ENCODE measurements at regions of chr1 and their contacts with region 1.

Region 1: GRCh38 chr1:84753516-84754385 is 63.5 kb upstream of the SSX2IP start:
- DNase-seq: peak; percentile 57 to 64
- H3K4me3 ChIP-seq: no peak overlapping the region
- H3K4me3 Mint-ChIP-seq: no peak overlapping the region
- H3K27ac Mint-ChIP-seq: no peak overlapping the region
- H3K4me1 ChIP-seq: no peaks in the 10 kb centered on the region
- H3K4me1 Mint-ChIP-seq: no peaks in the 10 kb centered on the region
- H3K27me3 ChIP-seq: no peaks in the 10 kb centered on the region
- H3K27me3 Mint-ChIP-seq: no peaks in the 10 kb centered on the region
- CTCF ChIP-seq: peak; percentile 78 to 87

Region 2: DNA sequence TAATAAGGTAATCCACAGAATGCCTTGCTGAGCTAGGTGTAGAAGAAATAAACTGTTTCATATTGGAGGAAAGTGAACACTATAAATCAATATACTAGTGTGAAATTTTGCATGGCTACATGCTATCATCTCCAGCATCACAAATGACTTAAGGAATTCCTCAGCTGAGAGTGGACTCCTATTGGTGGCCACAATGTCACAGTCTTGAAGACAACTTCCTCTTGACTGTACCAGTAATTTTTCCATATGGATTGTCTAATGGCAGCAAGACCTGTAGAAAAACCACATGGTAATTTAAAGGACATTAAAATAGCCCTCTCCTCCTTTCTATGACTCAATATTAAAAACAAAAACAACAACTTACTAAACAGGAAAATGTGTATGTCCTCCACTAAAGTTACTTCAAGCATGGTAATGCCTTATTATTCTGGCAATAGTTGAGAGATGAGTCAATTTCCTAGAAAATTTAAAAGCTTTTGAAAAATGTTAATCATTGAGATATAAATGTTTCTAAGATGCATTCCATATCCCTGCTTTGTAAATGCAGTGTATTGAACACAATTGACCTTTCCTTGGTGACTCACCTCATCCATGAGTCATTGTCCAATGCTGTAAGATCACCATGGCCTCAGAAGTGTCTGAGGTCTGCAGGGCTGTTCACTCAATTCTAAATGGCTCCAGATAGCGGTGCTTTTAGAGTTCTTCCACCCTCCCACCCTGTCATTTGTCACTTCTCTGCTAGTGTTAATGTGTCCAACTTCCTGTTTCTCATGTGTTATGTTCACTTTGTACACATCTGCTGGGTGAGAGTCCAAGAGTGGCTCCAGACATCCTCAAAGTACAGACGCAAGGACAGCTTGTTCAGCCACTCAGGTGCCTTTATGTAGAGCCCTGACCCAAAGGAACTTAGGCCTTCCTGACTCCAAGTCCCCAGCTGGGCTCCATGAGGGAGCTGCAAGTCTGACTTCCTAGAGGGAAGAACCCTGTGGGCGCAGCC is 388.2 kb before region 1 on chr1:
- CTCF ChIA-PET with region 1: no interaction called
- POLR2A ChIA-PET with region 1: no interaction called
- intact Hi-C with region 1: no loop called
- DNase-seq: peak; percentile 5 to 25
- H3K4me3 ChIP-seq: no peak overlapping the region
- H3K4me3 Mint-ChIP-seq: no peak overlapping the region
- H3K27ac Mint-ChIP-seq: no peak overlapping the region
- H3K4me1 ChIP-seq: no peaks in the 10 kb centered on the region; the same call in 1 of the 2 replicates
- H3K4me1 Mint-ChIP-seq: no peaks in the 10 kb centered on the region
- H3K27me3 ChIP-seq: no peaks in the 10 kb centered on the region
- H3K27me3 Mint-ChIP-seq: no peaks in the 10 kb centered on the region
- CTCF ChIP-seq: no peak

Region 3: DNA sequence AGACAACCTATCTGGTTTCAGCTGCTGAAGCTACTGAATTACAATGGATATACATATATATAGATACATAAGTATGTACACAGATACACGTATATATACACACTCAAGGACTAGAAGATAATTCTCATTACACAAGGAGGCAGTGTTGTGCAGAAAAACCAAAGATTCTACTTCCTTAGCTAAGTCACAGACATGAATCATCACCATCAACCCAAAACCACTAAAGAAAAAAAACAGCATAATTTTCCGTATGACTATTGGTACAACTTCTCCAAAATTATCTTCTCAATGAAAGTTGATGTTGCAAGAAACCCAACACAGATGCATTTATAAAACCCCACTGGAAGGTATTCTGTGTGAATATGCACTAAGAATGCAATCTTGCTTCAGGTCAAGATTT is 311.5 kb before region 1 on chr1:
- CTCF ChIA-PET with region 1: interaction called, 3 read pairs
- POLR2A ChIA-PET with region 1: no interaction called
- intact Hi-C with region 1: loop called (anchors 1 kb)
- DNase-seq: peak in 1 of 2 experiments; percentile 1
- H3K4me3 ChIP-seq: no peak overlapping the region
- H3K4me3 Mint-ChIP-seq: no peak overlapping the region
- H3K27ac Mint-ChIP-seq: no peak overlapping the region
- H3K4me1 ChIP-seq: no peaks in the 10 kb centered on the region
- H3K4me1 Mint-ChIP-seq: no peaks in the 10 kb centered on the region
- H3K27me3 ChIP-seq: no peaks in the 10 kb centered on the region
- H3K27me3 Mint-ChIP-seq: peaks cover 5% of the 10 kb centered on the region
- CTCF ChIP-seq: peak in 1 of 2 experiments; percentile 13

Region 4: DNA sequence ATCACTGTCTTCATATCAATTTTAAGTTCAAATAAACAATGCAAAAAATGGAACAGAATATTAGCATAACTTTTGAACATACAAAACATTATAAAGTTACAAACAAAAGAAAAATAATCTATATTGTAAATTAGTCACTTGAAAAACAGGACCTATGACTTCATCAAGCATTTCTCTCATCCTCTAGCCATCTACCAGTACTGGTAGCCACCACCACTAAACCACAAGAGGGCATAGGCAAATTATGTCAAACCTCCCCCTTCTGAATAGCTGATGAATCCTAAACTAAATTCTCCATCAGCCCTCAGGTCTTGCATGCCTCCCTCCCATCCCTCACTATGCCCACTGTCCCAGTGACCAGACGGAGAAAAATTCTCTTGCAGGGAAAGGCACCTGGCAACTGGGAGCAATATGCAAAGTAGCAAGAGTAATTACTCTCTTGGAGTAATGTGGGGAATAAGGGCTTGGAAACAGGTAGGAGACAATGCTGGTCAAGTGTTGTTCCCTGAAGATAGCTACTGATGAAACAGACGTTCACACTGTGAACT is 100.5 kb before region 1 on chr1:
- CTCF ChIA-PET with region 1: no interaction called
- POLR2A ChIA-PET with region 1: no interaction called
- intact Hi-C with region 1: loop called (anchors 1 kb)
- DNase-seq: no peak
- H3K4me3 ChIP-seq: no peak overlapping the region
- H3K4me3 Mint-ChIP-seq: no peak overlapping the region
- H3K27ac Mint-ChIP-seq: no peak overlapping the region
- H3K4me1 ChIP-seq: no peaks in the 10 kb centered on the region
- H3K4me1 Mint-ChIP-seq: no peaks in the 10 kb centered on the region
- H3K27me3 ChIP-seq: no peaks in the 10 kb centered on the region
- H3K27me3 Mint-ChIP-seq: no peaks in the 10 kb centered on the region
- CTCF ChIP-seq: no peak

Region 5: DNA sequence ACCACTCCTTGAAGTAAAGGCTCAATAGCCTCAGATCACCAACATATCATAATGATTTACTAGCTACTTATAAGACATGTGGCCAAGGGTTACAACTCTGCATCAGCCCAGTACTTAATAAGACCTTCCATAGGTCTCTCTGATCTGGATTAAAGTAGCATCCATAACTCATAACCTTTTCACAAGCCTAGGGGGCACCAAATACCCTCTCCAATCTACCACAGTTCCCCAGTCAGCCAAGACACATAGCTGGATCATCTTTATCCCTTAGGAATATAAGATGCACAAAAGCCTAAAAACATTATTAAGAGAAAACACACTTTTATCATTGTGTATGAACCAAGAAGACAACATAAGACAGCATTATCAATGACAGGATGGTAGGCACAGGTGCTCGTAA is 85.6 kb before region 1 on chr1:
- CTCF ChIA-PET with region 1: no interaction called
- POLR2A ChIA-PET with region 1: no interaction called
- intact Hi-C with region 1: loop called (anchors 1 kb)
- DNase-seq: peak in 1 of 2 experiments; percentile 15
- H3K4me3 ChIP-seq: no peak overlapping the region
- H3K4me3 Mint-ChIP-seq: no peak overlapping the region
- H3K27ac Mint-ChIP-seq: no peak overlapping the region
- H3K4me1 ChIP-seq: no peaks in the 10 kb centered on the region
- H3K4me1 Mint-ChIP-seq: no peaks in the 10 kb centered on the region
- H3K27me3 ChIP-seq: no peaks in the 10 kb centered on the region
- H3K27me3 Mint-ChIP-seq: no peaks in the 10 kb centered on the region
- CTCF ChIP-seq: peak in 1 of 2 experiments; percentile 17

Region 6: DNA sequence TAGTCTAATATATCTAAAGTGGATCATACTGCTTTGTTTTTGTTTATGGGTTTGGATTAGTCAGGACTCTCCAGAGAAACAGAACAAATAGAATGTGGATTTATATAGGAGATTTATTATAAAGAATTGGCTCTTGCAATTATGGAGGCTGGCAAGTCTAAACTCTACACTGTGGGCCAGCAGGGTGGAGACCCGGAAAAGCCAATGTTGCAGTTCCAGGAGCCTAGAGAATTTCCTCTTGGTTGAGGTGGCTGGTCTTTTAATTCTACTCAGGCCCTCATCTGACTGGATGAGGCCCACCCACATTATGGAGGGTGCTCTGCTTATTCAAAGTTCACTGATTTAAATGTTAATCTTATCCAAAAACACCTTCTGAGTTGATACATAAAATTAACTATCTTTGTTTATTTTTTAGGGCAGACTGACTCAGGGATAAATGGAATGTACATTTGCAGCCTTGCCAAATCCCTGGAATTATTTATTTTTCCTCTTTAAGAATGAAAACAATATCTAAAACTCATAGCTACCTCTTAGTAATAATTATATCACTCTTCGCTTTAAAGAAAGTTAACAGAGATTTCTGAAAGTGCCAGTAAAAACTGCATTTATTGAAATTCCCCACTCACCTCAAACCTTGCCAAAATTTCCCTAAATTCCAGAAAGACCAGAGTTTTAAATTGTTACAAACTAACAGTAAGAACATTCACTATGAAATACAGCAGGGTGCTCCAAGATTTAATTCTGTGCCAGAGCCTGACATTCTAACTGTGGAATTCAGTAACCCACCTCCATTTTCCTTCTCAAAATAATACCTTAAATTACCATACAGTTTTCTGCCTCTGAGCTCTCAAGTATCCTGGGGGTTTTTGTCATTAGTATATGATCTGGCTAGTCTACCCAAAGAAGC is 26.9 kb before region 1 on chr1:
- CTCF ChIA-PET with region 1: no interaction called
- POLR2A ChIA-PET with region 1: no interaction called
- intact Hi-C with region 1: no loop called
- DNase-seq: no peak
- H3K4me3 ChIP-seq: no peak overlapping the region
- H3K4me3 Mint-ChIP-seq: no peak overlapping the region
- H3K27ac Mint-ChIP-seq: no peak overlapping the region
- H3K4me1 ChIP-seq: peaks cover 7% of the 10 kb centered on the region
- H3K4me1 Mint-ChIP-seq: peaks cover 9% of the 10 kb centered on the region
- H3K27me3 ChIP-seq: no peaks in the 10 kb centered on the region
- H3K27me3 Mint-ChIP-seq: peaks cover 5% of the 10 kb centered on the region
- CTCF ChIP-seq: no peak

Region 7: DNA sequence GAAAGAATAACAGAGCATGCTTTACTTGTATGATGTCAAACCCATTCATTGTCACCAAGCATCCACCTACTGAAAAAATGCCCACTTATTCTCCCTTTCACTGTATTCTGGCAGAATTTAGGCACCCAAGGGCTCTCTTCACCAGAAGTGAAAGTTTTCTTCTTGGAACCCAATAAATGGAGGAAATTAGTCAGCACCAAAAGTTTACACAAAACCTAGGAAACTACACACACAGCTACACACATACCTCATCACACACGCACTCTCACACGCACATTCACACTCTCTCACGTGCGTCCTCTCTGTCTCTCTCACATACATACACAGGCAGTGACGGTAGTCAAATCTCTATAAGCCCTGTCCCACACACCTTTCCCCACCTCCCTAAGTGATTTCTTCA is 205.5 kb after region 1 on chr1:
- CTCF ChIA-PET with region 1: no interaction called
- POLR2A ChIA-PET with region 1: no interaction called
- intact Hi-C with region 1: no loop called
- DNase-seq: no peak
- H3K4me3 ChIP-seq: no peak overlapping the region
- H3K4me3 Mint-ChIP-seq: no peak overlapping the region
- H3K27ac Mint-ChIP-seq: no peak overlapping the region
- H3K4me1 ChIP-seq: peaks cover 10% of the 10 kb centered on the region
- H3K4me1 Mint-ChIP-seq: no peaks in the 10 kb centered on the region
- H3K27me3 ChIP-seq: no peaks in the 10 kb centered on the region
- H3K27me3 Mint-ChIP-seq: no peaks in the 10 kb centered on the region
- CTCF ChIP-seq: no peak

Region 8: GRCh38 chr1:86052948-86053698 is 1299.4 kb after region 1 on chr1:
- CTCF ChIA-PET with region 1: no interaction called
- POLR2A ChIA-PET with region 1: no interaction called
- intact Hi-C with region 1: no loop called
- DNase-seq: no peak
- H3K4me3 ChIP-seq: no peak overlapping the region
- H3K4me3 Mint-ChIP-seq: no peak overlapping the region
- H3K27ac Mint-ChIP-seq: no peak overlapping the region
- H3K4me1 ChIP-seq: no peaks in the 10 kb centered on the region
- H3K4me1 Mint-ChIP-seq: no peaks in the 10 kb centered on the region
- H3K27me3 ChIP-seq: no peaks in the 10 kb centered on the region
- H3K27me3 Mint-ChIP-seq: no peaks in the 10 kb centered on the region
- CTCF ChIP-seq: no peak